ENCODE measurements at regions of chr22 and their contacts with region 1.

Region 1: GRCh38 chr22:44180706-44181032 is at the start of gene PARVG:
- DNase-seq: peak; percentile 53
- H3K4me3 Mint-ChIP-seq: peak within 1 kb of the TSS; percentile 95
- H3K27ac Mint-ChIP-seq: peak within 1 kb of the TSS; percentile 94
- H3K4me1 Mint-ChIP-seq: peaks cover 22% of the 10 kb centered on the region
- H3K27me3 Mint-ChIP-seq: peaks cover 25% of the 10 kb centered on the region
- total RNA-seq, gene PARVG: 123 to 128 TPM

Region 2: DNA sequence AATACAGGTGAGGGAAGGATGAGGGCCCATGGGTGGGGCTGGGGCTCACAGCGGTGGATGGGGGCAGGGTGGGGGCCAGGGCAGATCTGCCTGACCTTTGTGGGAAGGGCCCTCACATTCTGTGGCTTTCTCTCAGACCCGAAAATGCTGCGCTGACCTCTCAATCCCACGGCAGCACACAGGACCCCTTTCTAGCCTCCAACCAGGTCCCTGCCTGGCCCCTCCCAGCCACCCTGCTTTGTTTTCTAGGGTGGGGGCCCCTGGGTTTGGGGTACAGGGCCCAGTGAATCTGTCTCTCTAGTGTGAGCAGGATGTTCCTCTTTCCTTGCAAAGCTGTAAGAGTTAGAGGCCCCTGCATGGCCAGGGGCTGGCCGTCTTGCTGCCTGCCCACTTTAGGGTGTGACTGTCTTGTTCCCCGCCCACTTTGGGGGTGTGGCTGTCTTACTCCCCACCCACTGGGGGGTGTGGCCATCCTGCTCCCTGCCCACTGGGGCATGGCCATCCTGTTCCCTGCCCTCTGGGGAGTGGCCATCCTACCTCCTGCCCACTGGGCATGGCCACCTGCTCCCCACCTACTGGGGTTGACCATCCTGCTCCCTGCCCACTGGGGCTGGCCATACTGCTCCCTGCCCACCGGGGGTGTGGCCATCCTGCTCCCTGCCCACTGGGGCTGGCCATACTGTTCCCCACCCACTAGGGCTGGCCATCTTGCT is 11.6 kb after region 1 on chr22:
- CTCF ChIA-PET with region 1: interaction called, 3 read pairs
- POLR2A ChIA-PET with region 1: interaction called, 67 read pairs
- DNase-seq: peak; percentile 61
- H3K4me3 Mint-ChIP-seq: no peak overlapping the region
- H3K27ac Mint-ChIP-seq: no peak overlapping the region
- H3K4me1 Mint-ChIP-seq: peaks cover 54% of the 10 kb centered on the region
- H3K27me3 Mint-ChIP-seq: no peaks in the 10 kb centered on the region

Region 3: DNA sequence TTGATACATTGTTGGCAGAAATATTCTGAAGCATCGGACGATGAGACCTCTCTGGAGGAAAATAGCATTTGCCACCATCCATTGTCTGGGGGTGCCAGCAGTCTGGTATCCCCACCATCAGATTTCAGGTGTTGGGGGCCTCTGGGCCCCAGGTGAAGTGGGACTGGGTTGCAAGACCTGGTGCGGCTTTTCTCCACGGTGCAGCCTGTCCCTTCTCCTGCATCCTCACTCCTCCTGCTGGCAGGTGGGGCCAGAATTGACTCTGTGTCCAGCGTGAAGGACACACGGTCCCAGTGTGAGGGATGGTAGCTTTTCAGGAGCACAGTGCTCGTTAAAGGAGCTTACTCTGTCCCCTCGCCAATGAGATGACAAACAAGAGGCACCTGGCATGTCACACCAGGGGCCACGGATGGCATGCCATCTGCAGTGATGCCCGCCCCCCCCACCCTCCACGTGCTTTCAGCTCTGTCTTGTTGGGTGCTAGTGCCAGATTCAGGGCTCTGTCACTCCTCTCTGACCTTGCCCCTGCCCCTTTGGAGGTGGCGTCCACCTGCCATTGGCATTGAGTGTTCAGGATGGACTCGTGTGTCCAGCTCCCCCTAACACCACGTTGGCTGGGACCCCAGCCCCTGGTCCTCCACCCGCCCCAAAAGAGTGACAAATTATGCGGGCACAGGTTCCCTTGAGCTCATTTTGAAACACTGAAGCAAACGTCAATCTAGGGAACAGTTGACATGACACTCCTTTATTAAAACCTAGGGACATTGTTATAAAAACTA is 62.5 kb after region 1 on chr22:
- CTCF ChIA-PET with region 1: no interaction called
- POLR2A ChIA-PET with region 1: no interaction called
- DNase-seq: no peak
- H3K4me3 Mint-ChIP-seq: no peak overlapping the region
- H3K27ac Mint-ChIP-seq: no peak overlapping the region
- H3K4me1 Mint-ChIP-seq: no peaks in the 10 kb centered on the region
- H3K27me3 Mint-ChIP-seq: peaks cover 21% of the 10 kb centered on the region